Caco-2 (cell line): ENCODE measurements at regions of chr6 and their contacts with region 1.

Region 1: DNA sequence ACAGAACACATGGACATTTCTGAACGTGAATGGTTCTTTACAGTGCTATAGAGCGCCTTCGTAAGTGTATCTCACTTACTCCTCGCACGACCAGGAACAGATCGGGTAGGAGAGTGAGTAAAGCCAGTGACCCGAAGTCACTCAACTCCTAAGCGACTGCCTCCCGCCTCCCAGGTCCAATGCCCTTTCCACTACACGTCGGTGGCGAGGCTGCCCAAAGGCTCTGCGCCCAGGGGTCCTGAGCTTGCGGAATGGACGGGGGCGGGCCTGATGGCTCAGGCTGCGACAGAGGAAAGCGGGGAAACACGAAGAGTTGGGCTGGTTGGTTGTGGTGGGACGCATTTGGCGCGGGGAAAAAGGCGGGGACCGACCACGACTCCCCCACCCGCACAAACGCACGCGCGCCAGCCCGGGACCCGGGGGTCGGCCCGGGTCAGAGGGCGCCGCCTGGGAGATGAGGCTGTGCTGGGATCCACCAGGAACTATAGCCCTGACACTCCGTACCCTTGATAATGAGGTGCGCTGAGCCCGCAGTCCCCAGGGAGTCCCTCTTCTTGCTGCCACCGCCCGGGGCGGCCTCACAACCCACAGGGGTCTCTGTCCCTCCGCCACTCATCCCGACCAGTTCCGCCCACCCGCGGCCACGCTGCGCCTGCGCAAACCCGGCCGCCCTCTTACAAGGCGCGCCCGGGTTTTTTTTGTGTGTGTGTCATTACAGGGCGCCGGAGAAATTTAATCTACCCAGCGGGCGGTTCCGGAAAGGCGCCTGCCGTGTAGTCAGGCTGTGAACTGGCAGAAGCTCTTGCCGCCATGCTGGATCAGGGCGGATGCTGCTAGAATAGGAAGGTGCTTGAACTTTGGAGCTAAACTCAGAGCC is at the start of gene BLOC1S5:
- DNase-seq: peak; percentile 98
- H3K4me3 ChIP-seq: peak within 1 kb of the TSS; percentile 77
- H3K4me3 Mint-ChIP-seq: peak within 1 kb of the TSS; percentile 97
- H3K27ac Mint-ChIP-seq: peak within 1 kb of the TSS; percentile 96
- H3K4me1 ChIP-seq: peaks cover 19% of the 10 kb centered on the region
- H3K4me1 Mint-ChIP-seq: peaks cover 21% of the 10 kb centered on the region
- H3K27me3 ChIP-seq: no peaks in the 10 kb centered on the region
- H3K27me3 Mint-ChIP-seq: no peaks in the 10 kb centered on the region
- CTCF ChIP-seq: no peak
- total RNA-seq, gene BLOC1S5: 15.0 and 16.4 TPM in 2 replicates

Region 2: GRCh38 chr6:7910654-7911344 is 153.2 kb before region 1 on chr6 and contains the start of gene TXNDC5:
- CTCF ChIA-PET with region 1: no interaction called
- POLR2A ChIA-PET with region 1: no interaction called
- intact Hi-C with region 1: loop called (anchors 2 kb)
- DNase-seq: peak; percentile 72 to 85
- H3K4me3 ChIP-seq: peak within 1 kb of the TSS; percentile 77
- H3K4me3 Mint-ChIP-seq: peak within 1 kb of the TSS; percentile 80
- H3K27ac Mint-ChIP-seq: peak within 1 kb of the TSS; percentile 74
- H3K4me1 ChIP-seq: peaks cover 5% of the 10 kb centered on the region; the same call in 1 of the 2 replicates
- H3K4me1 Mint-ChIP-seq: no peaks in the 10 kb centered on the region
- H3K27me3 ChIP-seq: no peaks in the 10 kb centered on the region
- H3K27me3 Mint-ChIP-seq: no peaks in the 10 kb centered on the region
- CTCF ChIP-seq: no peak
- total RNA-seq, gene TXNDC5: 117 and 119 TPM in 2 replicates

Region 3: GRCh38 chr6:8029243-8029870 is 34.6 kb before region 1 on chr6:
- CTCF ChIA-PET with region 1: no interaction called
- POLR2A ChIA-PET with region 1: no interaction called
- intact Hi-C with region 1: no loop called
- DNase-seq: no peak
- H3K4me3 ChIP-seq: no peak overlapping the region
- H3K4me3 Mint-ChIP-seq: no peak overlapping the region
- H3K27ac Mint-ChIP-seq: no peak overlapping the region
- H3K4me1 ChIP-seq: 0 out of 2 replicates have a peak, but pooled peaks cover 5% of the 10 kb centered on the region
- H3K4me1 Mint-ChIP-seq: no peaks in the 10 kb centered on the region
- H3K27me3 ChIP-seq: no peaks in the 10 kb centered on the region
- H3K27me3 Mint-ChIP-seq: no peaks in the 10 kb centered on the region
- CTCF ChIP-seq: no peak

Region 4: DNA sequence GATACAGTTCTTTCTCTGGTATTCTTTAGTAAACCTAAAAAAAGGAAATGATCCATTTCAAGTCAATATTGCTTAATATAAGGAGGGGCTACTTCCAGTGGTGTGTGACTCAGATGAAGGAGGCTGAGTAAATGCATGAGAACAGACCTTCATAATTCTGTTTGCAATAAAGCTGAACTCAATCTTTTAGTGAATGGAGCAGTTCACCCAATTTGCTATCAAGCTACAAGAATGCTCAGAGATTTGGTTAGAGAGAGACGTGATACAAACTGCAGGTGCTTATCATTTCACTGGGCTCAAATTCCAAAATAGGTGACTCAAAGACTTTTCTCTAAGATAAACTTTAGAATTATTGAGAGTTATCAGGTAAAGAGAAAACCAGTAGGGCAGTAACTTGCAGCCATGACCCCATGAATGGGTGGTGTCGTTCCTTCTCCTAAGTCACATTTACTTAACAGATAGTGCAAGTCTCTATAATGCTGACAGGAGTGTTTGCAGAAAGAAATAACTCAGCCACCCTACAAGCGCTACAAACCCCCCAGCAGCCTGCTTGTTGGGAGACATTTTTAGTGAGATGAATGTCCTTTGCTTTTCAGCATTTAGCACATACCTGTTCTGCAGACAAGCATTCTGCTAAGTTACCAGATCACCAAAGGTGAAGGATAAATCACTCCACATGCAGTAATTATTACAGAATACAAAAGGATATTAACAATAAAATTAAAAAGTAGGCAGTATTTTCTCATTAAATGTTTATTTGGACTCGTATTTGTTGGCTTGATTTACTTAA is 16.6 kb after region 1 on chr6:
- CTCF ChIA-PET with region 1: interaction called, 3 read pairs
- POLR2A ChIA-PET with region 1: interaction called, 8 read pairs
- intact Hi-C with region 1: loop called (anchors 1 kb)
- DNase-seq: peak; percentile 61 to 81
- H3K4me3 ChIP-seq: no peak overlapping the region
- H3K4me3 Mint-ChIP-seq: peak overlapping the region; percentile 30
- H3K27ac Mint-ChIP-seq: peak overlapping the region; percentile 32
- H3K4me1 ChIP-seq: peaks cover 71% of the 10 kb centered on the region
- H3K4me1 Mint-ChIP-seq: peaks cover 47% of the 10 kb centered on the region
- H3K27me3 ChIP-seq: no peaks in the 10 kb centered on the region
- H3K27me3 Mint-ChIP-seq: no peaks in the 10 kb centered on the region
- CTCF ChIP-seq: no peak

Region 5: DNA sequence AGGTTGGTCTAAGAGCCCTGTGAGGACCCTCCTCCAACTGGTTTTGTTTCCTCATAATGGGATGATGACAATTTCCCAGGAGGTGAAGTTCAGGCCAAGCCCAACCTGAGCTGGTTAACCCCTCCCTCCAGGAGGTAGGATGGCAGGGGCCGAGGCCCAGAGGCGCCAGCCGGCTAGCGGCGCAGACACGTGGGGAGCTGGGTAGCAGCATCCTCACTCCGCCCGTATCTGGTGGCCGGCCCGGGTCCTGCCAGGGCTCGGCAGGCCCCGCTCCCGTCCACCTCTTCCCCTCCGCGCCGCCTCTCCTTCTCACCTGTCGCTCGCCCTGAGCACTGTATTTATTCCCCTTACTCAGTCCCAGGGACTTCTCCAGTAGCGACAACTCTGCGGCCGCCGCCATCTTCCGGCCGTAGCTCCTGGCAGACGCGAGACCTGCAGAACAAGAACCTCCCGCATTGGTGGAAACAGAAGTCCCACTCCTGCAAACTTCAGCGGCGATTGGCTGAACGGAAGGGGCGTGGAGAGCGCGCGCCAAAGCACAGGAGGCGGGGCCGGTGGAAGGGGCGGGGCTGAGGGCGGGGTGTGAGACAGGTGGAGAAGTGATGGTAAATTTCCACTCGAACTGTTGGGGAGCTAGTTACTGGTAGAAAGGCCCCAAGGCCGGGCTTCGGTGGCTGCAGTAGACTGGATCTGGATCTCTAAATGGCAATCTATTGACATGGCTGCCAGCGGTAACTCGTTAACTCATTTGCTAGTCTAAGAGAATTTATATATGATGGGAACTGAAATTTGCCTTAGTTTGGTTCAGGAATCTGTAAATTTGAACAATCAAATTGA is 38.3 kb after region 1 on chr6 and contains the start of gene EEF1E1:
- CTCF ChIA-PET with region 1: interaction called, 7 read pairs
- POLR2A ChIA-PET with region 1: interaction called, 19 read pairs
- intact Hi-C with region 1: loop called (anchors 1 kb)
- DNase-seq: peak; percentile 94 to 98
- H3K4me3 ChIP-seq: peak within 1 kb of the TSS; percentile 80
- H3K4me3 Mint-ChIP-seq: peak within 1 kb of the TSS; percentile 88
- H3K27ac Mint-ChIP-seq: peak within 1 kb of the TSS; percentile 89
- H3K4me1 ChIP-seq: peaks cover 8% of the 10 kb centered on the region; the same call in 1 of the 2 replicates
- H3K4me1 Mint-ChIP-seq: no peaks in the 10 kb centered on the region
- H3K27me3 ChIP-seq: no peaks in the 10 kb centered on the region
- H3K27me3 Mint-ChIP-seq: no peaks in the 10 kb centered on the region
- CTCF ChIP-seq: no peak
- total RNA-seq, gene EEF1E1: 60.3 TPM in 2 replicates